ENCODE measurements at regions of chr5 and their contacts with region 1.

Region 1: GRCh38 chr5:171606414-171607024 is 179.1 kb upstream of the SMIM23 start:
- DNase-seq: no peak
- H3K27ac ChIP-seq: no peak overlapping the region
- CTCF ChIP-seq: peak; percentile 31

Region 2: GRCh38 chr5:171595801-171596231 is 10.7 kb before region 1 on chr5:
- CTCF ChIA-PET with region 1: interaction called, 11 read pairs
- POLR2A ChIA-PET with region 1: no interaction called
- DNase-seq: peak; percentile 45
- H3K27ac ChIP-seq: peak overlapping the region; percentile 33; the same call in 1 of the 2 replicates
- CTCF ChIP-seq: no peak

Region 3: DNA sequence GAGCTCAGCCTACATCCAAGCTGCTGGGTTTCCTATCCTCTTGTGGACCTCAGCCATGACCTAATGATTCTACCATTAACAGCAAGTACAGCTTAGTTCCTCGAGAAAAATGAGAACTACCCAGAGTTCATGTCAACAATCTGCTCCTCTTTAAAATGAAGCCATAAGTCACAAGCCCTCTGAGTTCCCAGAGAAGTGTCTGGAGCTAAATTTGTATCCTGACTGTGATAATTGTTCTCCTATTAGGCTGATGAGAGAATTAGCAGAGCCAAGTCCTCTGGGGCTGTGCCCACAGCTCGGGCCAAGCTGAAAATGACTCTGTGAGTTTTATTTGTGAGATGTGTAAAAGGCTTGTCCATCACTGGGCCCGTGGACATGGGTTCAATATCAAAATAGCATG is 34.0 kb after region 1 on chr5:
- CTCF ChIA-PET with region 1: no interaction called
- POLR2A ChIA-PET with region 1: no interaction called
- DNase-seq: no peak
- H3K27ac ChIP-seq: no peak overlapping the region
- CTCF ChIP-seq: no peak

Measured in RWPE1 (cell line).